H1 (cell line): ENCODE measurements at regions of chr14 and their contacts with region 1.

Region 1: DNA sequence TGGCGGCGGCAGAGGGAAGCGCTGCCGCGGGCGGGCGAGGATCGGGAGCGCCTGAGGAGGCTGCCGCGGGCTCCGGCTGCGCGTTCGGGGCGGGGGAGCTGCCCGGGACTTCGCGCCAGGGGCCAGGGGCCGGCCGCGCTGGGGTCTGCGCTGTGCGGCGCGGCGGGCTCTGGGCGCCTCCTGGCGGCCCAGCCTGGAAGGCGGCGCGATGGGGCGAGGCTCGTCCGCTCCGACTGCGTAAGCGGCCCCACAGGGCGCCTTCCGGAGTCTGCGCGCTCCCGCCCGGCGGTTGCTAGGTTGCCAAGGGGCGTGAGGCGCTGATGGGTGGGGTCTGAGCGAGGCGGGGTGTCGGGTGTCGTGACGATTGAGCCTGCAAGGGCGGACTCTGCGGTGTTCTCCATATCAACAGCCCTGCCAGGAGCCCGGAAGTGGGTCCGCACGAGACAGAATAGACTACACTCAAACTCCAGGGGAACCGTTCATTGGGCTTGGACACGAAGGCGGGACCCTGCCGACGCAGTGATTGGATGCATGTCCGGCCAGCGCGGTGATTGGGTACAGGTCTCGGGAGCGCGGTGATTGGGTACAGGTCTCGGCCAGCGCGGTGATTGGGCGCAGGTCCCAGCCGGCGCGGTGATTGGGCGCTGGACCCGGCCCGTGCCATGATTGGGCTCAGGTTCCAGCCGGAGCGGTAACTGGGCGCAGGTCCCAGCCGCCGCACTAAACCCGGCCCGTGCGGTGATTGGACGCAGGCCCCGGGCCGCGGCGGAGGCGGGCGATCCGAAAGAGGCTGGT is at the start of gene TEDC1:
- DNase-seq: peak; percentile 90 to 92
- H3K4me3 ChIP-seq: peak within 1 kb of the TSS; percentile 37 to 91 (median 70)
- H3K27ac ChIP-seq: peak within 1 kb of the TSS; percentile 73; the same call in 1 of the 2 replicates
- H3K4me1 ChIP-seq: peaks cover 0 to 20% (median 5%) of the 10 kb centered on the region in 4 experiments; a peak in 5 of 7 replicates
- H3K27me3 ChIP-seq: peaks cover 25 to 33% (median 32%) of the 10 kb centered on the region in 4 experiments
- CTCF ChIP-seq: peak in 2 of 3 experiments; percentile 79 to 91; a peak in 3 of 4 replicates
- EP300 ChIP-seq: no peak
- POLR2A ChIP-seq: peak in 1 of 2 experiments; percentile 94; a peak in 2 of 3 replicates
- RAD21 ChIP-seq: peak; percentile 51 to 74
- total RNA-seq, gene TEDC1: 5.6 and 6.4 TPM in 2 replicates

Region 2: GRCh38 chr14:105368965-105369652 is 121.7 kb before region 1 on chr14:
- CTCF ChIA-PET with region 1: interaction called, 16 read pairs
- POLR2A ChIA-PET with region 1: no interaction called
- DNase-seq: no peak
- H3K4me3 ChIP-seq: no peak overlapping the region
- H3K27ac ChIP-seq: no peak overlapping the region
- H3K4me1 ChIP-seq: no peaks in the 10 kb centered on the region
- H3K27me3 ChIP-seq: no peaks in the 10 kb centered on the region; a peak in 1 of 7 replicates
- CTCF ChIP-seq: no peak
- EP300 ChIP-seq: no peak
- POLR2A ChIP-seq: no peak
- RAD21 ChIP-seq: no peak

Region 3: DNA sequence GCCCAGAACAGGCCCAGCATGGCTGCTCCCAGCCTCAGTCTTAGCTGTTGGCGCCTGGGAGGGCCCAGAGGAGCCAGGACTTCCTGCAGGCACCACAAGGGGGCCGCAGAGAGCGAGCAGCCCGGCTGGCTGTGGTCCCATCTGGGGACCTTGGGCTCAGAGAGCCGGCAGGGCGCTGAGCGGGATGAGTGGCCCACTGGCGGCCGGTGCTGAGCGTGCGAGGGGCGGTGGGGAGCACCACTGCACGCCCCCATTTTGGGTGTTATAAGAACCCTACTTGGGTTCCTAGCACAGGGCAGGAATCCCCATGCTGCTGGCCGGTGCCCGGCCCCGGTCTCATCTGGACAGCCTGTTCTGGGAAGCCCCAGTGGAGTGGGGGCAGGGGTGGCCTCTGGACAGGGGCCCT is 42.1 kb before region 1 on chr14:
- CTCF ChIA-PET with region 1: interaction called, 16 read pairs
- POLR2A ChIA-PET with region 1: no interaction called
- DNase-seq: peak; percentile 21 to 90
- H3K4me3 ChIP-seq: no peak overlapping the region
- H3K27ac ChIP-seq: no peak overlapping the region
- H3K4me1 ChIP-seq: no peaks in the 10 kb centered on the region
- H3K27me3 ChIP-seq: no peaks in the 10 kb centered on the region
- CTCF ChIP-seq: peak in 2 of 3 experiments; percentile 78 to 85; a peak in 3 of 4 replicates
- EP300 ChIP-seq: no peak
- POLR2A ChIP-seq: no peak
- RAD21 ChIP-seq: peak; percentile 43 to 65; a peak in 3 of 4 replicates

Region 4: DNA sequence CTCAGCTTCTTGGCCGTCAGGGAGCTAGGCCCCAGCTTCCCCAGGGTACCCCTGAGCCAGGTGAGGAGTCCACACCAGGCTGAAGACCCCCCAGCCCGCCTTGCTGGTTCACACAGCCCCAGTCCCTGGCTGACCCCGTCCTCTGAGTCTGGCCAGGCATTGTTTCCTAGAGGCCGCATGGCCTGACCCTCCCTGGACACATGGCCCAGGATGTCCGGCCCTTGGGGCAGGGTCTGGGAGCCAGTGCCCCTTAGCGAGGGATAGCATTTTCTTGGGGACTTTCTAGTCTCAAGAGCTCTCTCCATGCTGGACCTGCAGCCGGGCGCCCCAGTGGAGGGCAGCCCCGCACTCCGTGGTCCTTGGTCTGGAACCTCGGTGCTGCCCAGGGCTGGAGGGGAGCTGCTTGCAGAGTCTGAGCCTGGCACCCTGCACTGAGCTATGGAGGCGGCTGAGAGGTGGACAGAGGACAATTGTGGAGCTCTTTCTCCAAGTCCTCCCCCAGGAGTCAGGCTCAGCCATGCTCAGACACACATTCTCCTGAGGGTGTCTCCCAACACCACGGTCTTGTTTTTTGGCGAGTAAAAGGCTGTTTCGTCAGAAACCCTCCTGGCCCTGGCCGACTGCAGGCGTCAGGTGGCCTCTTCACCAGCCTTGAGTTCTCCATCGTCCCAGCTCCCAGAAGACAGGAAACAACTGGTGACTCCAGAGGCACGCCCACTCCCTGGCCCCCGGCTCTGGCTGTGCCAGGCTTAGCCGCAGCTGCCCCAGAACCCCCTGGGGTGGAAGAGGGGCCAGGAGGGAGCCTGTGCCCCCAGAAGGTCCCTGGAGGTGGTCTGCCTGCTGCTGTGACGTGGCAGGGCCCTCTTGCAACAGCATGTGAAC is 33.8 kb before region 1 on chr14:
- CTCF ChIA-PET with region 1: interaction called, 11 read pairs
- POLR2A ChIA-PET with region 1: no interaction called
- DNase-seq: no peak
- H3K4me3 ChIP-seq: no peak overlapping the region
- H3K27ac ChIP-seq: peak overlapping the region; percentile 33; the same call in 1 of the 2 replicates
- H3K4me1 ChIP-seq: 0 out of 7 replicates have a peak, but pooled peaks cover 0 to 3% (median 0%) of the 10 kb centered on the region in 4 experiments
- H3K27me3 ChIP-seq: no peaks in the 10 kb centered on the region
- CTCF ChIP-seq: no peak
- EP300 ChIP-seq: no peak
- POLR2A ChIP-seq: no peak
- RAD21 ChIP-seq: no peak